ENCODE measurements at regions of chr3 and their contacts with region 1.

Region 1: GRCh38 chr3:100400780-100401673 is at the starts of genes LNP1 and TOMM70:
- DNase-seq: peak; percentile 90 to 93
- H3K4me3 ChIP-seq: peak within 1 kb of the TSS; percentile 59 to 96 (median 84)
- H3K27ac ChIP-seq: peak within 1 kb of the TSS; percentile 95
- H3K4me1 ChIP-seq: peaks cover 0 to 3% (median under 1%) of the 10 kb centered on the region in 4 experiments; a peak in 2 of 7 replicates
- H3K27me3 ChIP-seq: no peaks in the 10 kb centered on the region
- CTCF ChIP-seq: no peak
- EP300 ChIP-seq: no peak
- POLR2A ChIP-seq: peak; percentile 88 to 94
- RAD21 ChIP-seq: no peak
- total RNA-seq, gene LNP1: 8.0 and 8.7 TPM in 2 replicates
- total RNA-seq, gene TOMM70: 51.2 and 52.1 TPM in 2 replicates

Region 2: GRCh38 chr3:100334488-100335351 is 66.3 kb before region 1 on chr3 and contains the start of gene NIT2:
- CTCF ChIA-PET with region 1: no interaction called
- POLR2A ChIA-PET with region 1: interaction called, 23 read pairs
- DNase-seq: peak; percentile 77 to 92
- H3K4me3 ChIP-seq: peak within 1 kb of the TSS; percentile 49 to 75 (median 68)
- H3K27ac ChIP-seq: no peak within 1 kb of the TSS
- H3K4me1 ChIP-seq: peaks cover 0 to 6% (median 4%) of the 10 kb centered on the region in 4 experiments; a peak in 5 of 7 replicates
- H3K27me3 ChIP-seq: no peaks in the 10 kb centered on the region; a peak in 2 of 7 replicates
- CTCF ChIP-seq: no peak
- EP300 ChIP-seq: peak in 1 of 2 experiments; percentile 43; a peak in 1 of 3 replicates
- POLR2A ChIP-seq: peak; percentile 67 to 88
- RAD21 ChIP-seq: peak in 1 of 2 experiments; percentile 3; a peak in 1 of 4 replicates
- total RNA-seq, gene NIT2: 24.1 and 25.3 TPM in 2 replicates

Region 3: DNA sequence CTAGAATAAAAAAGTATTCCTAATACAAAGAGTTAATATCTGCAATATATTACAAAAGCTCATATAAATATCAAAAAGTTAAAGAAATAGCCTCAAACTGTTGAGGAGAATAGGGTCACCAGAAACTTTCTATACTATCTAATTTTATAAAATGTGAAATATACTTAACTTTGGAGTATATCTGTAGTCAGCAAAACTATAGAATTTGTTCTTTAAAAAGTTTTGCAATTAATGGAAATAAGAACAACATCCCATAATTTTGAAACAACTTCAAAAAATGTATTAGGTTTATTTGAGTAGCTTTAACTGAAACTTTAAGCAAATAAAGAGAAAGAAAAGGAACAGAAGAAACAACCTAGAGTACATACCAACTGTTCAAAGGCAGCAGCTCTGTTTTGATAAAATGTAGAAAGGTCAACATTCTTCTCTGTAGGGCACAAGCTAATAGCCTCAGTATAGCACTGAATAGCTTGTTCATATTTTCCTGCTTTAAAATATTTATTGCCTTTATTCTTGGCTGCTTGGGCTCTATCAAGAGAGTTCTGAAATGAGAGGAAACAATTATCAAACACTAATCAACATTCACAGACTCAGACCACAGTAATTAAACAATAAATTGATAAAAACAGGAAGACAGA is 14.5 kb before region 1 on chr3:
- CTCF ChIA-PET with region 1: interaction called, 3 read pairs
- POLR2A ChIA-PET with region 1: interaction called, 26 read pairs
- DNase-seq: no peak
- H3K4me3 ChIP-seq: no peak overlapping the region
- H3K27ac ChIP-seq: no peak overlapping the region
- H3K4me1 ChIP-seq: no peaks in the 10 kb centered on the region
- H3K27me3 ChIP-seq: no peaks in the 10 kb centered on the region
- CTCF ChIP-seq: no peak
- EP300 ChIP-seq: no peak
- POLR2A ChIP-seq: no peak
- RAD21 ChIP-seq: no peak

Region 4: DNA sequence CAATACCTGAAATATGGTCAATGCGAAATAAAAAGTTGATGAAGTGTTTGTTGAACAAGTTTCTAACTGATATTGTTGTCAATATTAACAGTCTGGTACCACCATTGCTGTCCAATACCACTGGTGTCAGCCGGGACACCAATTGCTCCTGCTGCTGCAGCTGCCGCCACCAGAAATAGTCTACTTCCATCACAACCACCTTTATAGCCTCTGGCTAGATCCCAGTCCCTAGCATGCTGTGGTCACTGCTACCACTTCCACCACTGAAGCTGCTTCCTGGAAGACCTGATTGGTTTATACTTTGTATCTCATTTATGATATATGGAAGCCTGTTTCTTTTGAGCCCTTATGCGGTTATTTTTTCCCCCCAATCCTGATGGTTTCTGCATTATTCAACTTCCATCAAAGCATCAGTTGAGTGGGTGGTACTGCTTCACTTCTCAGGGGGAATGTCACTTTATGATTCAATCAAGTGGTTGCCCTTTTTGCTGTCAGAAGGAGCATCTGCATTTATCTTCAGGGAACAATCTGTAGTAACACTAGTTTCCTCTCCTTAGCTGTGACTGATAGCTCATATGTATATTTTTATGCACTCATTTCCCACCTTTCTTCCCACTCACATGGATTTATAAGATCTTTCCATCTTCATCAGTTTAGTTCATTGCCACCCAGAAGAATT is 12.0 kb after region 1 on chr3:
- CTCF ChIA-PET with region 1: interaction called, 6 read pairs
- POLR2A ChIA-PET with region 1: interaction called, 58 read pairs
- DNase-seq: no peak
- H3K4me3 ChIP-seq: no peak overlapping the region
- H3K27ac ChIP-seq: no peak overlapping the region
- H3K4me1 ChIP-seq: peaks cover 2 to 15% (median 5%) of the 10 kb centered on the region in 4 experiments; a peak in 5 of 7 replicates
- H3K27me3 ChIP-seq: no peaks in the 10 kb centered on the region
- CTCF ChIP-seq: no peak
- EP300 ChIP-seq: no peak
- POLR2A ChIP-seq: no peak
- RAD21 ChIP-seq: no peak

Region 5: GRCh38 chr3:100419406-100419805 is 18.4 kb after region 1 on chr3:
- CTCF ChIA-PET with region 1: interaction called, 6 read pairs
- POLR2A ChIA-PET with region 1: interaction called, 58 read pairs
- DNase-seq: no peak
- H3K4me3 ChIP-seq: no peak overlapping the region
- H3K27ac ChIP-seq: no peak overlapping the region
- H3K4me1 ChIP-seq: peaks cover 0 to 6% (median 1%) of the 10 kb centered on the region in 4 experiments; a peak in 2 of 7 replicates
- H3K27me3 ChIP-seq: no peaks in the 10 kb centered on the region
- CTCF ChIP-seq: no peak
- EP300 ChIP-seq: no peak
- POLR2A ChIP-seq: no peak
- RAD21 ChIP-seq: no peak

Region 6: DNA sequence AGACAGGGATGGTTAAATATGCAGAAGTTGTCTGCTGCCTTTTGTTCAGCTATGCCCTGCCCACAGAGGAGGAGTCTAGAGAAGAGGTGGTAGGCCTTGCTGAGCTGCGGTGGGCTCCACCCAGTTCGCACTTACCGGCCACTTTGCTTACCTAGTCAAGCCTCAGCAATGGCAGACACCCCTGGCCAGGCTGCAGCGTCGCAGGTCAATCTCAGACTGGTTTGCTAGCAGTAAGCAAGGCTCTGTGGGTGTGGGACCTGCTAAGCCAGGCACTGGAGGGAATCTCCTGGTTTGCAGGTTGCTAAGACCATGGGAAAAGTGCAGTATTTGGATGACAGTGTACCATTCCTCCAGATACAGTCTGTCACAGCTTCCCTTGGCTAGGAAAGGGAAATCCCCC is 79.1 kb after region 1 on chr3:
- CTCF ChIA-PET with region 1: no interaction called
- POLR2A ChIA-PET with region 1: no interaction called
- DNase-seq: no peak
- H3K4me3 ChIP-seq: no peak overlapping the region
- H3K27ac ChIP-seq: no peak overlapping the region
- H3K4me1 ChIP-seq: no peaks in the 10 kb centered on the region
- H3K27me3 ChIP-seq: no peaks in the 10 kb centered on the region
- CTCF ChIP-seq: no peak
- EP300 ChIP-seq: no peak
- POLR2A ChIP-seq: no peak
- RAD21 ChIP-seq: no peak

Region 7: GRCh38 chr3:100708967-100709841 is 308.2 kb after region 1 on chr3 and contains the start of gene TFG:
- CTCF ChIA-PET with region 1: no interaction called
- POLR2A ChIA-PET with region 1: interaction called, 14 read pairs
- DNase-seq: peak; percentile 96
- H3K4me3 ChIP-seq: peak within 1 kb of the TSS; percentile 78 to 86 (median 81)
- H3K27ac ChIP-seq: peak within 1 kb of the TSS; percentile 95
- H3K4me1 ChIP-seq: peaks cover 0 to 8% (median 2%) of the 10 kb centered on the region in 4 experiments; a peak in 3 of 7 replicates
- H3K27me3 ChIP-seq: peaks cover 1 to 25% (median 11%) of the 10 kb centered on the region in 4 experiments; a peak in 6 of 7 replicates
- CTCF ChIP-seq: no peak
- EP300 ChIP-seq: no peak
- POLR2A ChIP-seq: peak; percentile 79 to 92
- RAD21 ChIP-seq: no peak
- total RNA-seq, gene TFG: 81.9 and 84.2 TPM in 2 replicates

Measured in H1 (cell line).